Lower leg skin (tissue), 4 donors: ENCODE measurements at regions of chr18 and their contacts with region 1.

Region 1: DNA sequence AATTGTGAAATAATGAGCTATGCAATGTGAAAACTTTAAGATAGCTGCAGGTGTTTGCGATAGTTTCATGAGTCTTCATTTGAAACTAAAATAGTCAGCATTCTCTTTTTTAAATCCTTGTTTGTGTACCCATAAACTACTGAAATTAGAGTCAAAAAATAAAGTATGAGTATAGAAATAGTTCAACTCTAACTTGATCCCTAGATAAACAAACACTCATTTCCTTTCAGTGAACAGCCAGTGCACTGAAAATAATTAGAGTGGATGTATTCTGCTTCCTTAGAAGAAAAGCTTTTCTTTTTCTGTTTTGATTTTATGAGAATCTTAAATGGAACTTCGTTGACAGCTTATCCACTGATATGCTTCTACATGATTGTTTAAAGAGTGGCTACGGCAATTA is 1033.4 kb downstream of the SOCS6 start:
- DNase-seq: no peak
- H3K4me3 ChIP-seq: no peak overlapping the region
- CTCF ChIP-seq: no peak
- POLR2A ChIP-seq: no peak

Region 2: GRCh38 chr18:69626643-69627242 is 1695.5 kb before region 1 on chr18:
- intact Hi-C with region 1: loop called (anchors 5 kb)
- DNase-seq: no peak
- H3K4me3 ChIP-seq: no peak overlapping the region
- CTCF ChIP-seq: no peak
- POLR2A ChIP-seq: no peak